CD4-positive, alpha-beta T cell (primary cell): ENCODE measurements at regions of chr10 and their contacts with region 1.

Region 1: DNA sequence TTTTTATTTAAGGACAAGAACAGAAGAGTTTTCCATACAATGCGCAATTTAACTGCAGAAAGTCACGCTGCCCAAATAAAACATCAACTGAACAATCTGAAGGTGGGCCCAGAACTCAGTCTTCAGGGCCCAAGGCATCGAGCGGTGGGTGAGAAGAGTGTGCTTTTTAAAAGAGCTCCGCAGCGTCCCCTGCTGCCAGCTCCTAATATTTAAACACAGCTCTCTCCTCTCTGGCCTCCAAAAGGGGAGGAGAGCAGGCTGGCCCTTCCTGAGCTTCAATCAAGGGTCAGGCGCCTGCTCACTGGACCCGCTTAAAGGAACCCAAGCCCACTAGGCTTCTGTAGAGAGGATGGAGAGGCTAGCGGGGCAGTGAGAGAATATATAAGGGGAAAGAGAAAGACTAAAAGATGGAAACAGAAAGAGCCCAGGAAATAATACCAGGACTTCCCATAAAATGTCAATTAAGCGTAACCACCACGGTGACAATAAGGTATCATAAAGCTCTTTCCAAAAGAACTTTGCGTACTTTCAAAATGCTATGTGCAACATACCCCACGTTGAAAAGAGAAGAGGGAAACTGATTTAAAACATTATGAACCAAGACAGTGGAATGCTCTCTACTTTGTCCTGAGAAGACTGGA is 2.8 kb downstream of the FAM53B start:
- DNase-seq: peak; percentile 66 to 87 (median 74)
- ATAC-seq: peak; percentile 58
- H3K4me3 ChIP-seq: peak overlapping the region; percentile 83
- H3K4me3 Mint-ChIP-seq: peak overlapping the region; percentile 99
- H3K27ac ChIP-seq: peak overlapping the region; percentile 51 to 60
- H3K27ac Mint-ChIP-seq: peak overlapping the region; percentile 88
- H3K4me1 ChIP-seq: peaks cover 69% of the 10 kb centered on the region
- H3K4me1 Mint-ChIP-seq: peaks cover 84% of the 10 kb centered on the region
- H3K27me3 ChIP-seq: no peaks in the 10 kb centered on the region
- H3K27me3 Mint-ChIP-seq: no peaks in the 10 kb centered on the region
- CTCF ChIP-seq: peak; percentile 93

Region 2: GRCh38 chr10:124461438-124462347 is 279.7 kb before region 1 on chr10 and contains the start of gene LHPP:
- CTCF ChIA-PET with region 1: interaction called, 3 read pairs
- POLR2A ChIA-PET with region 1: interaction called, 5 read pairs
- intact Hi-C with region 1: loop called in 1 of 2 experiments (anchors 2 kb)
- DNase-seq: peak; percentile 65 to 93 (median 84)
- ATAC-seq: peak; percentile 94
- H3K4me3 ChIP-seq: peak within 1 kb of the TSS; percentile 65
- H3K4me3 Mint-ChIP-seq: peak within 1 kb of the TSS; percentile 92
- H3K27ac ChIP-seq: peak within 1 kb of the TSS; percentile 53 to 67
- H3K27ac Mint-ChIP-seq: peak within 1 kb of the TSS; percentile 83
- H3K4me1 ChIP-seq: peaks cover 36% of the 10 kb centered on the region
- H3K4me1 Mint-ChIP-seq: peaks cover 27% of the 10 kb centered on the region
- H3K27me3 ChIP-seq: peaks cover 0 to 8% of the 10 kb centered on the region in 2 experiments
- H3K27me3 Mint-ChIP-seq: peaks cover 10% of the 10 kb centered on the region
- CTCF ChIP-seq: peak; percentile 17
- total RNA-seq, gene LHPP: 15.3 to 19.6 TPM

Region 3: GRCh38 chr10:124612611-124613498 is 128.5 kb before region 1 on chr10:
- CTCF ChIA-PET with region 1: interaction called, 3 read pairs
- POLR2A ChIA-PET with region 1: interaction called, 13 read pairs
- intact Hi-C with region 1: no loop called
- DNase-seq: peak in 7 of 14 experiments; percentile 13 to 56 (median 42)
- ATAC-seq: peak; percentile 49
- H3K4me3 ChIP-seq: no peak overlapping the region
- H3K4me3 Mint-ChIP-seq: no peak overlapping the region
- H3K27ac ChIP-seq: peak overlapping the region; percentile 45 to 81
- H3K27ac Mint-ChIP-seq: peak overlapping the region; percentile 88
- H3K4me1 ChIP-seq: peaks cover 55% of the 10 kb centered on the region
- H3K4me1 Mint-ChIP-seq: peaks cover 31% of the 10 kb centered on the region
- H3K27me3 ChIP-seq: no peaks in the 10 kb centered on the region
- H3K27me3 Mint-ChIP-seq: no peaks in the 10 kb centered on the region
- CTCF ChIP-seq: no peak

Region 4: GRCh38 chr10:124640538-124641231 is 100.7 kb before region 1 on chr10:
- CTCF ChIA-PET with region 1: interaction called, 23 read pairs
- POLR2A ChIA-PET with region 1: interaction called, 50 read pairs
- intact Hi-C with region 1: loop called (anchors 1 to 5 kb)
- DNase-seq: peak in 4 of 14 experiments; percentile 39 to 58 (median 48)
- ATAC-seq: peak; percentile 25
- H3K4me3 ChIP-seq: peak overlapping the region; percentile 15
- H3K4me3 Mint-ChIP-seq: peak overlapping the region; percentile 46
- H3K27ac ChIP-seq: peak overlapping the region; percentile 43 to 49
- H3K27ac Mint-ChIP-seq: peak overlapping the region; percentile 95
- H3K4me1 ChIP-seq: peaks cover 100% of the 10 kb centered on the region
- H3K4me1 Mint-ChIP-seq: peaks cover 86% of the 10 kb centered on the region
- H3K27me3 ChIP-seq: no peaks in the 10 kb centered on the region
- H3K27me3 Mint-ChIP-seq: no peaks in the 10 kb centered on the region
- CTCF ChIP-seq: no peak

Region 5: DNA sequence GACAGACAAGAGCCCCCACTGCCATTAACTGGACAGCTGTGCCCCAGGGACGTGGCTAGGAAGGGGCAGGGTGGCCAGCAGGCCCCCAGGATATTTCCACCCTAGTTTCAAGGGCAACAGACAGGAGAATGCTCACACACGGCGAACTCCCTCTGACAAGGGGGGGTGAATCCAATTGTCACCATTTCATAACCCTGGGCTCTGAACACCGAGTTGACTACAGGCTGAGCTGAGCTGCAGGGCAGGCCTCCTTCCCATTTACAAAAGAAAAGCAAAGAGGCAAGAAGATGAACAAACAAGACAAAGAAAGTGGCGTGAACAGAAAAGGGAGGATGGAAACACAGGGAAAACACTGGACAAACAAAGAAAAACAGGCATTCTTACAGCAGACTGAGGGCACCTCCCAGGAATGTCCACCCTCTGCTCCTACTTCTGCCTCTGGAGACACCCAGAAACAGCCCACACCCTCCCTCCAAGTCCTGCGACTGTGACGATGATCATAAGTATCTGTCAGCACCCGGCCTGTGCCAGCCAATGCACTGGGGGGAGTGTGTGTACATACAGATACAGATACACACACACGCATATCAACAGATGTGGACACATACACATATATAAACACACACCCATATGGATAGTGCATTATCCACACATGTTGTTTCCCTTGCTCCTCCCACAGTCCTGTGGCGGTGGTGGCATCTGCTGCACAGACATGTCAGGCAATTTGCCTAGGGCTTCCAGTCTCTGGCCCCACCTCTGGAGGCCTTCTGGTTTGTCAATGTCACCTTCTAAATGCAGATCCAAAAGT is 63.4 kb before region 1 on chr10:
- CTCF ChIA-PET with region 1: interaction called, 11 read pairs
- POLR2A ChIA-PET with region 1: interaction called, 8 read pairs
- intact Hi-C with region 1: loop called in 1 of 2 experiments (anchors 1 kb)
- DNase-seq: peak in 1 of 14 experiments; percentile 28
- ATAC-seq: peak; percentile 42
- H3K4me3 ChIP-seq: no peak overlapping the region
- H3K4me3 Mint-ChIP-seq: peak overlapping the region; percentile 63
- H3K27ac ChIP-seq: peak overlapping the region; percentile 29 to 39
- H3K27ac Mint-ChIP-seq: peak overlapping the region; percentile 87
- H3K4me1 ChIP-seq: peaks cover 94% of the 10 kb centered on the region
- H3K4me1 Mint-ChIP-seq: peaks cover 90% of the 10 kb centered on the region
- H3K27me3 ChIP-seq: no peaks in the 10 kb centered on the region
- H3K27me3 Mint-ChIP-seq: no peaks in the 10 kb centered on the region
- CTCF ChIP-seq: no peak

Region 6: DNA sequence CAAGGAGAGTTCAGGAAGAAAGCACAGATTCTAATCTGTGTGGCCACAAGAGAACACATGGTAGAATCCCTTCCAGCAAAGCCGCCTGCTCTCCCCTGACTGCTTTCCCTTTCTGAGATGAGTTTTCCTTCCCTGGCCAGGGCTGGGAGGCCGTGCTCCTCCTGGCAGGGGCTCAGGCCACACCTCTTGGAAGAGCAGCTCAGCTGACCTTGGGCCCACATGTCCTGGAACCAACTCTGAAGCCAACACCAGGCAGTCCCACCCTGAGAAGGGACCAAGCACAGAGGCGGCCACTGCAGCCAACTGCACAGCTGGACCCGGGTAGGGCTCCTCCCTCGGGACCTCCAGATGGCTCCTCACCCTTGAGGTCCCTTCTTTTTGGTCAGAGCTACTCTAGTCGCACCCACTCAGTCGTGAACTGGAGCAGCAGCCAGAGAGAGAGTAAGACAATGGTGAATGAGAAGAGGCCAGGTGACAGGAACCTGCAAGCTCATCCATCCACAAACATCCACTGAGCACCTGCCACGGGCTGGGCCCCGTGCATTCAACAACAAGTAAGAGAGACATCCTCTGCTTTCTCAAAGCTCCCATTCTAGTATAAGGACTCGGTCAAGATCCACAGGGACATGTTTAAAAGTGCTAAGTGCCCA is 37.5 kb before region 1 on chr10:
- CTCF ChIA-PET with region 1: interaction called, 28 read pairs
- POLR2A ChIA-PET with region 1: interaction called, 13 read pairs
- intact Hi-C with region 1: loop called (anchors 2 to 5 kb)
- DNase-seq: peak in 1 of 14 experiments; percentile 35
- ATAC-seq: no peak
- H3K4me3 ChIP-seq: no peak overlapping the region
- H3K4me3 Mint-ChIP-seq: peak overlapping the region; percentile 46
- H3K27ac ChIP-seq: peak overlapping the region; percentile 24 to 71
- H3K27ac Mint-ChIP-seq: peak overlapping the region; percentile 91
- H3K4me1 ChIP-seq: peaks cover 100% of the 10 kb centered on the region
- H3K4me1 Mint-ChIP-seq: peaks cover 99% of the 10 kb centered on the region
- H3K27me3 ChIP-seq: no peaks in the 10 kb centered on the region
- H3K27me3 Mint-ChIP-seq: no peaks in the 10 kb centered on the region
- CTCF ChIP-seq: no peak

Region 7: GRCh38 chr10:124916585-124917427 is 175.4 kb after region 1 on chr10:
- CTCF ChIA-PET with region 1: no interaction called
- POLR2A ChIA-PET with region 1: interaction called, 4 read pairs
- intact Hi-C with region 1: loop called in 1 of 2 experiments (anchors 5 kb)
- DNase-seq: peak; percentile 91 to 98 (median 96)
- ATAC-seq: peak; percentile 88
- H3K4me3 ChIP-seq: peak overlapping the region; percentile 94
- H3K4me3 Mint-ChIP-seq: peak overlapping the region; percentile 93
- H3K27ac ChIP-seq: peak overlapping the region; percentile 67 to 91
- H3K27ac Mint-ChIP-seq: peak overlapping the region; percentile 97
- H3K4me1 ChIP-seq: peaks cover 15% of the 10 kb centered on the region
- H3K4me1 Mint-ChIP-seq: peaks cover 46% of the 10 kb centered on the region
- H3K27me3 ChIP-seq: no peaks in the 10 kb centered on the region
- H3K27me3 Mint-ChIP-seq: peaks cover 5% of the 10 kb centered on the region
- CTCF ChIP-seq: no peak